Activated CD4-positive, alpha-beta T cell treated with anti-CD3 and anti-CD28 coated beads for 36 hours (primary cell): ENCODE measurements at regions of chr4 and their contacts with region 1.

Region 1: GRCh38 chr4:40199999-40200874 is 3.4 kb downstream of the RHOH start:
- DNase-seq: peak; percentile 90
- ATAC-seq: peak; percentile 53
- H3K4me3 Mint-ChIP-seq: peak overlapping the region; percentile 98
- H3K27ac Mint-ChIP-seq: peak overlapping the region; percentile 100
- H3K4me1 Mint-ChIP-seq: peaks cover 40% of the 10 kb centered on the region
- H3K27me3 Mint-ChIP-seq: no peaks in the 10 kb centered on the region

Region 2: DNA sequence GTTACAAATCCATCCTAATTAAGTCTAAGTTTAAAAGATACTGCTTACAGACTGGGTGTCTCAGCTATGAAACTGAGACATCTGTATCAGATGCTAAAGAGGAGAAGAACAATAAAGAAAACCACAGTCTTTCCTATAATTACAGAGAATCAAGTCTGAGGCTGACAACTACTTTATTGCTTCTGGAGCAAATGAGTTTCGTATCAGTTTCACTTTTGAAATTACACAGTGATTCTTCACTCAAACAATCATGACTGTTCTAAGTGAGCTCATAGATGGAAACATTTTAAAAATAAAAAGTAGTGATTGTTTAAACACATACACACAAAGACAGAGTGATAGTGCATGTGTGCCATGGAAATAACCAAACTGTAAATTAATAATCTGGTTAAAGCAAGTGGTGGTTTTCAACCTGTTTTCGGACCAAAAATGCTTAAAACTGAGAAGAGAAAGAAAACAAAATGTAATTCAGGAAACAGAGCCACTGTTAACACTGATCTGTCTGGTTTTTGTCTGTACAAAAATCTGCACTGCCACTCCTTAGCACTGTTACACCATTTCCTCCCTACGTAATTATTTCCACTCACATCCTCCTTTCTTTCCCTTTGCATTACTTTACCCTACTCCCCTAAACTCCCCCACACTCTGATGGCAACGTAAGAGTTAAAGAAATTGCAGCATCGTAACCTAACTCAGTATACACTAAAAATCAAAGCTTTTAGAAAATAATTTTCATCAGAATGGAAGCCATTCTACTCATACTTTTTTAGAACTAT is 846.6 kb before region 1 on chr4:
- CTCF ChIA-PET with region 1: no interaction called
- POLR2A ChIA-PET with region 1: no interaction called
- intact Hi-C with region 1: loop called (anchors 2 to 10 kb)
- DNase-seq: peak; percentile 47
- ATAC-seq: peak; percentile 85
- H3K4me3 Mint-ChIP-seq: peak overlapping the region; percentile 70
- H3K27ac Mint-ChIP-seq: peak overlapping the region; percentile 94
- H3K4me1 Mint-ChIP-seq: peaks cover 79% of the 10 kb centered on the region
- H3K27me3 Mint-ChIP-seq: no peaks in the 10 kb centered on the region

Region 3: GRCh38 chr4:39977489-39978377 is 222.5 kb before region 1 on chr4 and contains the start of gene PDS5A:
- CTCF ChIA-PET with region 1: no interaction called
- POLR2A ChIA-PET with region 1: no interaction called
- intact Hi-C with region 1: loop called in 1 of 2 experiments (anchors 1 kb)
- DNase-seq: peak; percentile 95
- ATAC-seq: peak; percentile 90
- H3K4me3 Mint-ChIP-seq: peak within 1 kb of the TSS; percentile 80
- H3K27ac Mint-ChIP-seq: peak within 1 kb of the TSS; percentile 98
- H3K4me1 Mint-ChIP-seq: peaks cover 38% of the 10 kb centered on the region
- H3K27me3 Mint-ChIP-seq: no peaks in the 10 kb centered on the region
- total RNA-seq, gene PDS5A: 98.5 to 102 TPM

Region 4: DNA sequence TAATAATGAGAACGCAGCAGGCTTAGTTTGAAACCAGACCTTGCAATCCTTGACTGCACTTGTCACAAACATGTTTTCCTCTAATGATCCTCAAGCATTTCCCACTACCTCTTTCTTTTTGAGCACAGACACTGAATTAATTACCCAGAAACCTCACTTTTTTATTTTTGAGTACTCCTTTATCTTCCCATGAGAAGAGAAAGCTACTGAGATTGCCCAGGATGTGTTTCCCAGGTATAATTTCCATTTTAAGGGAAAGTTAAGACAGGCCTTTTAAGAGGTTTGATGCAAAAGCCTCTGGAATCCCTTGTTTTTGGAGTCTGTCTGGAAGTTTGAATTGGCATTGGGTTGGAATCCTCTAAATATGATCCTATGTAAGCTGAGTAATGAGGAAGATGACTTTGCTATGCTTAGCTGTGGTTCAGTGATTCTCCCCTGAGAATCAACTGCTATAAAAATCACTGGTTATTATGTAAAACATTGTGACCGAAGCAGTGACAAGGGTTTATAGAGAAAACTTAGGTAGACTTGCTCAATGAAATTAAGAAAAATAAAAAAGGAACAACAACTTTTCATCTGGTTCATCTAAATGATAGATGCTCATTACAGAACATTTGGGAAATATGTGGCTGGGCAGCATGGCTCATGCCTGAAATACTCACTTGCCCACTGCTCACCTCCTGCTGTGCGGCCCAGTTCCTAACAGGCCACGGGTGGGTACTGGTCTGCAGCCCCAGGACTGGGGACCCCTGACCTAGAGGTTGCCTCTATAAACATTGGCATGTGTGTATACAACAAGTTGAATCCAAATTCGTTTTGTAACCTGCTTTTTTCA is 14.2 kb before region 1 on chr4:
- CTCF ChIA-PET with region 1: interaction called, 5 read pairs
- POLR2A ChIA-PET with region 1: interaction called, 18 read pairs
- intact Hi-C with region 1: loop called in 1 of 2 experiments (anchors 1 kb)
- DNase-seq: no peak
- ATAC-seq: no peak
- H3K4me3 Mint-ChIP-seq: no peak overlapping the region
- H3K27ac Mint-ChIP-seq: peak overlapping the region; percentile 25
- H3K4me1 Mint-ChIP-seq: peaks cover 75% of the 10 kb centered on the region
- H3K27me3 Mint-ChIP-seq: no peaks in the 10 kb centered on the region

Region 5: GRCh38 chr4:40255393-40256281 is 55.4 kb after region 1 on chr4:
- CTCF ChIA-PET with region 1: no interaction called
- POLR2A ChIA-PET with region 1: interaction called, 4 read pairs
- intact Hi-C with region 1: loop called (anchors 2 kb)
- DNase-seq: no peak
- ATAC-seq: peak; percentile 31
- H3K4me3 Mint-ChIP-seq: no peak overlapping the region
- H3K27ac Mint-ChIP-seq: peak overlapping the region; percentile 44
- H3K4me1 Mint-ChIP-seq: peaks cover 76% of the 10 kb centered on the region
- H3K27me3 Mint-ChIP-seq: no peaks in the 10 kb centered on the region

Region 6: GRCh38 chr4:40699648-40700047 is 499.4 kb after region 1 on chr4:
- CTCF ChIA-PET with region 1: no interaction called
- POLR2A ChIA-PET with region 1: no interaction called
- intact Hi-C with region 1: loop called in 1 of 2 experiments (anchors 1 kb)
- DNase-seq: peak; percentile 27
- ATAC-seq: peak; percentile 52
- H3K4me3 Mint-ChIP-seq: no peak overlapping the region
- H3K27ac Mint-ChIP-seq: peak overlapping the region; percentile 51
- H3K4me1 Mint-ChIP-seq: peaks cover 39% of the 10 kb centered on the region
- H3K27me3 Mint-ChIP-seq: no peaks in the 10 kb centered on the region

Region 7: GRCh38 chr4:40908702-40909362 is 708.6 kb after region 1 on chr4:
- CTCF ChIA-PET with region 1: no interaction called
- POLR2A ChIA-PET with region 1: no interaction called
- intact Hi-C with region 1: loop called in 1 of 2 experiments (anchors 5 kb)
- DNase-seq: peak; percentile 90
- ATAC-seq: peak; percentile 85
- H3K4me3 Mint-ChIP-seq: peak overlapping the region; percentile 26
- H3K27ac Mint-ChIP-seq: peak overlapping the region; percentile 95
- H3K4me1 Mint-ChIP-seq: peaks cover 36% of the 10 kb centered on the region
- H3K27me3 Mint-ChIP-seq: no peaks in the 10 kb centered on the region